ENCODE measurements at regions of chr13 and their contacts with region 1.

Region 1: DNA sequence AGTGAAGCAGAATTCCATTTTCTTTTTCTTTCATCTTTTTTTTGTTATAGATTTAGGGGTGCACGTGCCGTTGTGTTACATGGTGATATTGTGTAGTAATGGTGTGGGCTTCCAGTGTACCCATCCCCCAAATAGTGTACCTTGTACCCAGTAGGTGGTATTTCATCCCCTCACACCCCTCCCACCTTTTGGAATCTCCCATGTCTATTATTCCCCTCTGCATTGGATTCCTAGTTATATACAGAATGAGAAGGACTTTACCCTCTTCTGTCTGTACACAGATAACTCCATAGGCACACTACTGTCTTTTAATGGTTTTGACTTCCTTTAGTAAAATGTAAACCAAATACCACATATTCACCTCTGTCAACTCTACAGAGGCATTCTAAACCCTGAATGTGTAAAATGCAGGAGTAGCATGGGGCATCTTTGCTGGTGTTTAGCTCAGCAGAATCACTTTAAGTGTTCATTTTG is 28.0 kb downstream of the FRY start:
- DNase-seq: peak; percentile 98
- ATAC-seq: peak; percentile 98
- H3K4me3 ChIP-seq: no peak overlapping the region; a peak in 1 of 6 replicates
- H3K27ac ChIP-seq: peak overlapping the region; percentile 90
- H3K4me1 ChIP-seq: peaks cover 80% of the 10 kb centered on the region
- H3K27me3 ChIP-seq: no peaks in the 10 kb centered on the region
- CTCF ChIP-seq: no peak
- EP300 ChIP-seq: peak; percentile 43 to 86; a peak in 3 of 4 replicates
- POLR2A ChIP-seq: 0 out of 4 replicates have a peak, but pooled peaks of 1 of the 2 experiments have one; percentile 30
- RAD21 ChIP-seq: no peak

Region 2: DNA sequence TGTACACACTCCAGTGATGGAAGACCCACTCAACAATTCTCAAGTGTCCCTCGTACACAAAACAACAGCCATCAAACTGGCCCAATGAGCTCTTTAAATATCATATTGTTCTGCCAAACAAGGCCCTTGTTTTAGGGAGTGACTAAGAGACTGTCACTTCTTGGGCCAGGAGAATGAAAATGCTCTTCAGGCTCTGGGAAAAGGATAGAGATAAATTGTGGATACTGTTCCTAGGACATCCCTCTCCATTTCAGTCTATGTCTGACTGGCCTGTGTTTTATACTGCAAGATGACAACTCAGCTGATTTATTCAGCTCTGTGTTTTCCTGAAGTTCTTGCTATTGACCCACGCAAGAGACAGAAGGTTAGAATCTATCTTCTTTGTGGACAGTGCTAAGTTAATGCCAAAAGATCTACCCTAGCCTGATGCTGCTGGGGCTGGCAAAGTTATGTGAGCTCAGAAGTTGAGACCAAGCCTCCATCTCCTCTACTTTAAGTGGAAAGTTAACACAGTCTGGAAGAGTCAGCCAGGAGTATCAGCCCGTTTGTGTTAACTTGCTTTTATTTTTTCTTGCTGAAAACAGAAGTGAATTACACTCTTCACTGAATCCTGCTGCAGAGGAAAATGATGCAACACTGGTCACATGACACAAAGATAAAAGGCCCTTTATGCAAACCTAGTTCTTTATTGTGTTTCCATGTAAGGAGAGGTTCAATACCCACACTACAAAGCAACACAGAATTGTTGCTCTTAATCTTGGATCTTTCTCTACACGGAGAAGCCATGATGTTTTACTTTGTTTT is 13.4 kb before region 1 on chr13:
- CTCF ChIA-PET with region 1: no interaction called
- POLR2A ChIA-PET with region 1: interaction called, 6 read pairs
- in situ Hi-C with region 1: no loop called
- intact Hi-C with region 1: loop called (anchors 1 kb)
- DNase-seq: peak; percentile 92
- ATAC-seq: peak; percentile 88
- H3K4me3 ChIP-seq: peak overlapping the region in 1 of 3 experiments; percentile 24; a peak in 2 of 6 replicates
- H3K27ac ChIP-seq: peak overlapping the region; percentile 79
- H3K4me1 ChIP-seq: peaks cover 53% of the 10 kb centered on the region
- H3K27me3 ChIP-seq: no peaks in the 10 kb centered on the region
- CTCF ChIP-seq: no peak
- EP300 ChIP-seq: peak in 1 of 2 experiments; percentile 56; a peak in 2 of 4 replicates
- POLR2A ChIP-seq: no peak
- RAD21 ChIP-seq: no peak

Region 3: GRCh38 chr13:32075170-32075851 is 15.8 kb after region 1 on chr13:
- CTCF ChIA-PET with region 1: no interaction called
- POLR2A ChIA-PET with region 1: no interaction called
- in situ Hi-C with region 1: no loop called
- intact Hi-C with region 1: loop called (anchors 2 kb)
- DNase-seq: peak; percentile 80
- ATAC-seq: peak; percentile 88
- H3K4me3 ChIP-seq: peak overlapping the region in 1 of 3 experiments; percentile 19; a peak in 1 of 6 replicates
- H3K27ac ChIP-seq: peak overlapping the region; percentile 48
- H3K4me1 ChIP-seq: peaks cover 83% of the 10 kb centered on the region
- H3K27me3 ChIP-seq: no peaks in the 10 kb centered on the region
- CTCF ChIP-seq: no peak
- EP300 ChIP-seq: peak in 1 of 2 experiments; percentile 64; a peak in 2 of 4 replicates
- POLR2A ChIP-seq: no peak
- RAD21 ChIP-seq: no peak